ENCODE measurements at regions of chr7 and their contacts with region 1.

Region 1: DNA sequence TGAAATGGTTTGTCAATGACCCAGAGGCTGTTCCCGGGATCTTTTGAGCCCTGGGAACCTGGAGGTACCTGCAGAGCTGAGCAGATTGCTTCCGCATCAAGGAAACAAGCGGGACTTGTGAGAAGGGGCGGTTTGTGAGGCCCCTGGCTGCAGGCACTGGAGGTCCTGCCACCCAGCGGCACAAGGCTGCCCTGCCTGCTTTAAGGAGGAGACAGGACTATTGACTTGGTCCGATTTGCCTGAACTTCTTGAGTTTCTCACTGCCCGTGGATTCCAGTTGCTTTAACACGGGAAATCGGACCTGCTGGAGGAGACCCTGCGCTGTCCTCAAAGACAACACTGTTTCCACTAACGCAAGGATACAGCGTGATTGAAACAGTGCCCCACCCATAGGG is 130.1 kb downstream of the DNAJB6 start:
- DNase-seq: no peak
- ATAC-seq: no peak

Region 2: GRCh38 chr7:158740013-158740656 is 1273.3 kb after region 1 on chr7:
- intact Hi-C with region 1: loop called (anchors 5 kb)
- DNase-seq: no peak
- ATAC-seq: peak; percentile 85

Measured in sciatic nerve (tissue), 2 donors.